Activated CD8-positive, alpha-beta T cell treated with anti-CD3 and anti-CD28 coated beads for 36 hours (primary cell): ENCODE measurements at regions of chr12 and their contacts with region 1.

Region 1: DNA sequence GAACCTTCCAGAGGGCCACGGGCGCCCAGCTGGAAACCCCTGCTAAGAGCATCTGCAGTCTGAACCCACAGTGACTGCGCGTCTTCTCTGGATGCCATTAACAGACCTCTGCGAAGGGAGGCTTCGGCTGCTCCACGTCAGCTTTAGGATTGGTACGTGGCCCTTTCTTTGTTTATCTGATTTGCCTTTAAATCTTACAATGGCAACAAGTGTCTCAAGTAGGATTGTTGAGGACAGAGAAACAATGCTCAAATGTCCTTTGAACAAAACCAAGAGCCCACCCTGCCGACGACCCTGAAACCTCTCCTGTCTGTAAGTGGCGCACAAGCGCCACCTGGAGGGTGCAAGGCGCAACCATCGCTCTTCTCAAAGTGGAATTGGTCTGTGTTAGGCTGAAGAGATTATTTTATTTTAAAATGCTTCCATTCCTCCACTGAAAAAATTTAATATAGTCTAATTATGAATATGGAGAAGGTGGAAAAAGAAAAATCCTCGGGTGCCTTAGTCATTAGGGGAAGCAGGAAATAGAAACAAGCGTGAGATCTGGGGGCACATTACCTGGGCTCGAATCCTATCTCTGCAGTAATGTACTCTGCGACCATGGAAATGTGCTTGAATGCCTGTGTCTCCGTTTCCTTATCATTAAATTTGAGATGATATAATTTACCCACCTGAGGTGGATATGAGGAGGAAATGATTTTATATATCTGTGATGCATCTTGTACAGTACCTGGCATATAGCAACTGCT is 82.6 kb upstream of the PTPRB start:
- DNase-seq: peak; percentile 45
- ATAC-seq: peak; percentile 68
- H3K4me3 Mint-ChIP-seq: peak overlapping the region; percentile 28
- H3K27ac Mint-ChIP-seq: no peak overlapping the region
- H3K4me1 Mint-ChIP-seq: peaks cover 2% of the 10 kb centered on the region
- H3K27me3 Mint-ChIP-seq: peaks cover 3% of the 10 kb centered on the region
- CTCF ChIP-seq: peak; percentile 95

Region 2: DNA sequence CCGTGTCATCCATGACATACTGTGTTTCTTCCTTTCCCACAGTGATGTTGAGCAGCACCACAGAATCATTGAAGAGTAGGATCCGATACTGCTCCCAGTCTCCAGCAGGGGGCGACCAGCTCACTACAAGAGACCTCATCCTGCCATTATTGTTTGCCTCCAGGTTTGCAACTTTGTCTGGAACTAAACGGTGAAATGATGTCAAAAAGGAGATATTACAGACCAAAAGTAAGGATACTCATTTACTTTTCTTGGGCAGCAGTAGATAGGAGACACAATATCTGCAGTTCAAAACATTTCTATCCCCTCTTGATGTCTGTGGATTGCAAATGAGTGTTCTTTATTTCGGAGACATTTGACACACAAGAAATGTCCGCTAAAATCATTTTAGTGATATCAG is 129.8 kb before region 1 on chr12:
- CTCF ChIA-PET with region 1: interaction called, 12 read pairs
- POLR2A ChIA-PET with region 1: no interaction called
- intact Hi-C with region 1: loop called (anchors 2 kb)
- DNase-seq: peak; percentile 77
- ATAC-seq: peak; percentile 75
- H3K4me3 Mint-ChIP-seq: no peak overlapping the region
- H3K27ac Mint-ChIP-seq: no peak overlapping the region
- H3K4me1 Mint-ChIP-seq: no peaks in the 10 kb centered on the region
- H3K27me3 Mint-ChIP-seq: peaks cover 16% of the 10 kb centered on the region
- CTCF ChIP-seq: peak; percentile 72